IMR-90 (cell line): ENCODE measurements at regions of chr7 and their contacts with region 1.

Region 1: GRCh38 chr7:82044497-82045080 is 274.7 kb upstream of the HGF start:
- DNase-seq: peak; percentile 58
- ATAC-seq: peak; percentile 37; the same call in 1 of the 2 replicates
- H3K4me3 ChIP-seq: no peak overlapping the region
- H3K27ac ChIP-seq: no peak overlapping the region
- H3K4me1 ChIP-seq: peaks cover 3% of the 10 kb centered on the region
- H3K27me3 ChIP-seq: no peaks in the 10 kb centered on the region
- CTCF ChIP-seq: peak; percentile 78
- POLR2A ChIP-seq: no peak
- RAD21 ChIP-seq: peak; percentile 84

Region 2: GRCh38 chr7:81990395-81990794 is 54.2 kb before region 1 on chr7:
- CTCF ChIA-PET with region 1: no interaction called
- POLR2A ChIA-PET with region 1: no interaction called
- dilution Hi-C with region 1: no loop called
- in situ Hi-C with region 1: no loop called
- intact Hi-C with region 1: no loop called
- DNase-seq: peak; percentile 83
- ATAC-seq: no peak
- H3K4me3 ChIP-seq: no peak overlapping the region
- H3K27ac ChIP-seq: no peak overlapping the region
- H3K4me1 ChIP-seq: no peaks in the 10 kb centered on the region
- H3K27me3 ChIP-seq: no peaks in the 10 kb centered on the region
- CTCF ChIP-seq: no peak
- POLR2A ChIP-seq: no peak
- RAD21 ChIP-seq: no peak

Region 3: DNA sequence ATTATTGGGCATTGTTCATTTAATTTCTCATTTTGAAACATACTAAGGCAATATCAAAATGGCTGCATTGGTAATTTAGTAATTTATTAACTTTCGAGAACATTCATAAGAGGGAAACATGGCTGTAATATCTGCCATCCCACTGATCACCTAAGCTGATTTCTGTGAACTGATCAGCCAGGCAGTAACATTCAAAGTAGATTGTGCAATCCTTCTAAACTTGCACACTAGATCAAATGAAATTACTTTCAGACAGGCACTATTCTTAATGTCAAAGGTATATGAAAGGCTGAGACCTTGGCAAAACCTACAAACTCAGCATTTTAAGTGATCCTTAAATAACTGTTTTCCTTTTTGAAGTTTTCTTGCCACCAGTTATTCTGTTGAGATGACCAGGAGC is 108.3 kb after region 1 on chr7:
- CTCF ChIA-PET with region 1: no interaction called
- POLR2A ChIA-PET with region 1: no interaction called
- dilution Hi-C with region 1: no loop called
- in situ Hi-C with region 1: no loop called
- intact Hi-C with region 1: no loop called
- DNase-seq: no peak
- ATAC-seq: no peak
- H3K4me3 ChIP-seq: no peak overlapping the region
- H3K27ac ChIP-seq: no peak overlapping the region
- H3K4me1 ChIP-seq: no peaks in the 10 kb centered on the region; the same call in 1 of the 2 replicates
- H3K27me3 ChIP-seq: no peaks in the 10 kb centered on the region
- CTCF ChIP-seq: no peak
- POLR2A ChIP-seq: no peak
- RAD21 ChIP-seq: no peak

Region 4: DNA sequence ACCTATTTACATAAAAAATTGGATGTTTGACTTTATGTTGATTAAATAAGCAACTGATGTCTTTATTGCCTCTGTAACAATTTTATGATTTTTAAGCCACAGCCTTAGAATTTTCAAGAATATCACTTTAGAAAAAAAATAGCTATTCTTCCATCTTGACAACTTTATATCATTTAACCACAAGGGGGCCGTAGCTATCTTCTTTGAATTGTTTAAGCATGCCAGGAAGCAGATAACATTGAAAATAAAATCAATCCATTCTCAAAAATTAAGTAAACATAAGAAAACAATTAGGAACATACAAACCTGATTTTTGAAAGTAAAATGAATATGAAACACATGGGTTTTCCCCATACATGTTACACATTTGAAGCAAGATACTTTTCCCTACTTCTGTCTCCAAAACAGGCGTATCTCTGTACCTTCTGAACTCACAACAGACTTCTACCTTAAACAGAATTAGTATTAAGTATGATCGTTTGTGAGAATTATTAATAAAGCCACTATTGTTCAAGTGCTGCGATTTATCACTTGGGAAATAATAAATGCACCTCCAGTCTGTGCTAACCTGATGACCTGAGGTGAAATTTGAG is 190.0 kb after region 1 on chr7:
- CTCF ChIA-PET with region 1: no interaction called
- POLR2A ChIA-PET with region 1: no interaction called
- dilution Hi-C with region 1: no loop called
- in situ Hi-C with region 1: no loop called
- intact Hi-C with region 1: loop called (anchors 5 kb)
- DNase-seq: peak; percentile 59
- ATAC-seq: no peak; the same call in 1 of the 2 replicates
- H3K4me3 ChIP-seq: no peak overlapping the region
- H3K27ac ChIP-seq: no peak overlapping the region
- H3K4me1 ChIP-seq: 0 out of 2 replicates have a peak, but pooled peaks cover 1% of the 10 kb centered on the region
- H3K27me3 ChIP-seq: no peaks in the 10 kb centered on the region
- CTCF ChIP-seq: peak; percentile 75
- POLR2A ChIP-seq: no peak
- RAD21 ChIP-seq: peak; percentile 75

Region 5: GRCh38 chr7:82481499-82482097 is 437.0 kb after region 1 on chr7:
- CTCF ChIA-PET with region 1: interaction called, 3 read pairs
- POLR2A ChIA-PET with region 1: no interaction called
- dilution Hi-C with region 1: no loop called
- in situ Hi-C with region 1: no loop called
- intact Hi-C with region 1: loop called (anchors 5 kb)
- DNase-seq: peak; percentile 43
- ATAC-seq: 0 out of 2 replicates have a peak, but pooled peaks have one; percentile 40
- H3K4me3 ChIP-seq: no peak overlapping the region
- H3K27ac ChIP-seq: no peak overlapping the region
- H3K4me1 ChIP-seq: no peaks in the 10 kb centered on the region
- H3K27me3 ChIP-seq: no peaks in the 10 kb centered on the region
- CTCF ChIP-seq: peak; percentile 79
- POLR2A ChIP-seq: no peak
- RAD21 ChIP-seq: peak; percentile 74

Region 6: GRCh38 chr7:82578430-82578829 is 533.8 kb after region 1 on chr7:
- CTCF ChIA-PET with region 1: no interaction called
- POLR2A ChIA-PET with region 1: no interaction called
- dilution Hi-C with region 1: no loop called
- in situ Hi-C with region 1: loop called (anchors 25 kb)
- intact Hi-C with region 1: no loop called
- DNase-seq: peak; percentile 24
- ATAC-seq: no peak
- H3K4me3 ChIP-seq: no peak overlapping the region
- H3K27ac ChIP-seq: no peak overlapping the region
- H3K4me1 ChIP-seq: no peaks in the 10 kb centered on the region
- H3K27me3 ChIP-seq: no peaks in the 10 kb centered on the region; the same call in 1 of the 2 replicates
- CTCF ChIP-seq: no peak
- POLR2A ChIP-seq: no peak
- RAD21 ChIP-seq: no peak

Region 7: GRCh38 chr7:82605247-82605872 is 560.8 kb after region 1 on chr7:
- CTCF ChIA-PET with region 1: interaction called, 4 read pairs
- POLR2A ChIA-PET with region 1: no interaction called
- dilution Hi-C with region 1: no loop called
- in situ Hi-C with region 1: no loop called
- intact Hi-C with region 1: loop called (anchors 2 kb)
- DNase-seq: peak; percentile 46
- ATAC-seq: peak; percentile 80
- H3K4me3 ChIP-seq: no peak overlapping the region
- H3K27ac ChIP-seq: no peak overlapping the region
- H3K4me1 ChIP-seq: no peaks in the 10 kb centered on the region
- H3K27me3 ChIP-seq: no peaks in the 10 kb centered on the region
- CTCF ChIP-seq: peak; percentile 81
- POLR2A ChIP-seq: no peak
- RAD21 ChIP-seq: peak; percentile 81